Common myeloid progenitor, CD34-positive (primary cell): ENCODE measurements at regions of chr10 and their contacts with region 1.

Region 1: DNA sequence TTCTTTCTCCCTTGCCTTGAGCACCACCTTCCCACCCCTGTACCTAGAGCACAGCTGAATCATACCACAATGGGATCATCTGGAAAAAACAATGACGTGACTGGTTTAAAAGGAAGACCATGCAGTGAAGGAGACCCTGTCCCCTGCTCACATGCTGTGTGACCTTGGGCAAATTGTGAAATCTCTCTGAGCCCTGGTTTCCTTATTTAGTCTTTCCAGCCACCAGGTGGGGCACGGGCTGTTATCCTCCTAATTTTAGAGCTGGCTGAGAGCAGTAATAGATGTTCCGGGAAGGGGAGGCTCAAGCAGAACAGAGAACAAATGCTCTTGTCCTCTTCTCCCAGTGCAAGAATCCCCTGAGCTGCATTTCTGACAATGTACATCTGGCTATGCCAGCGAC is 198.3 kb downstream of the RPS24 start:
- DNase-seq: no peak
- H3K4me3 ChIP-seq: no peak overlapping the region
- H3K27ac ChIP-seq: no peak overlapping the region
- H3K4me1 ChIP-seq: peaks cover 3 to 16% (median 15%) of the 10 kb centered on the region in 4 experiments
- H3K27me3 ChIP-seq: no peaks in the 10 kb centered on the region

Region 2: GRCh38 chr10:78248651-78249464 is 16.9 kb after region 1 on chr10:
- CTCF ChIA-PET with region 1: interaction called, 54 read pairs
- POLR2A ChIA-PET with region 1: interaction called, 19 read pairs
- DNase-seq: peak in 2 of 3 donors; percentile 43 to 46
- H3K4me3 ChIP-seq: peak overlapping the region in 2 of 7 experiments; percentile 34 to 50
- H3K27ac ChIP-seq: no peak overlapping the region
- H3K4me1 ChIP-seq: peaks cover 7 to 51% (median 45%) of the 10 kb centered on the region in 4 experiments
- H3K27me3 ChIP-seq: no peaks in the 10 kb centered on the region